Left ventricle myocardium superior (tissue), 1 donor: ENCODE measurements at regions of chr3 and their contacts with region 1.

Region 1: GRCh38 chr3:134308350-134308891 is 57.8 kb upstream of the RYK start:
- DNase-seq: peak; percentile 83
- ATAC-seq: peak; percentile 67

Region 2: DNA sequence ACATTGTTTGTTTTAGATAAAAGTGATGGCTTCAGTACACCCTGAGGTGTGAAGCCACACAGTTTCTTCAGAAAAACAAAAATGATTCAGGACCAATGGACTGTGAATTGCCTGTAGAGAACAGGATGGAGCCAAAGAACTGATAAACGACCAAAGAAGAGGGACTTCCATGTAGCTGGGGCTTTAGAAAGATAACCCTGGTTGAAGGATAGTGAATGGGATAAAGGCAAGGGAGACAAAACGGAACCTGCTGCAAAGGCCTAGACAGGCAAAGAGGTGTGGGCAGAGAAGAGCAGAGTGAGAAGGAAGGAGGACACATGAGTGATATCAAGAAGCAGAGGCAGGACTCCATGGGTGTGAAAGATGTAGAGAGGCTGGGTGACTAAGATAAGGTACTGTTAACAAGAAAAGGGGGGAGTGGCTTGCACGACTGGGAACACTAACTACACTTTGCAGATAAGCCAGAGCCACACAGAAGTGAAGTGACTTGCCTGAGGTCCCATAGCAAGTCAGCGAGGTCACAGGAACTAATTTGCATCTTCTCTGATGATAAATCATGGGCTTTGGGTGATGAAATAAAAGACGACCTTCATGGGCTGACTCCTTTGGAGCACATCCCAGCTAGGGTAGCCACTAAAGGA is 457.0 kb before region 1 on chr3:
- intact Hi-C with region 1: no loop called
- DNase-seq: no peak
- ATAC-seq: no peak

Region 3: DNA sequence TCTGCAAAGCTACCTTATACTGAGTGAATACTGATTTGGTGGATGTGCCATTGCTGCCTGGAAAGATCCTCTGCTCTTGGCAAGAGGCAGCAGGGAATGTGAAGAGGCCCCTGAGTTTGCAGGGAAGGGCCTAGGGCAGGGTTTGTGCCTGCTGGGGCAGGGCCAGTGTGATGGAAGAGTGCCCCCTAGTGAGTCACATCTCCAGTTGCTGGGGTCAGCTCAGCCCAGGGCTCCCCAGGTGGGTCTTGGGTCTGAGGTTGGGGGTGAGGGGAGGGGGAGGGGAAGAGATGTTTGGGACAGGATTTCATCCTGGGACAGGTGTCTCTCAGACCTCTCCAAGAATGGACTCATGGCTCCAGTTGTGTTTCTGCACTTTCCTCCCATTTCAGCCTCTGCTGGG is 70.0 kb after region 1 on chr3:
- intact Hi-C with region 1: loop called (anchors 2 kb)
- DNase-seq: peak; percentile 66
- ATAC-seq: peak; percentile 13

Region 4: GRCh38 chr3:134430950-134431445 is 122.6 kb after region 1 on chr3:
- intact Hi-C with region 1: no loop called
- DNase-seq: no peak
- ATAC-seq: no peak